ENCODE measurements at regions of chr19 and their contacts with region 1.

Region 1: DNA sequence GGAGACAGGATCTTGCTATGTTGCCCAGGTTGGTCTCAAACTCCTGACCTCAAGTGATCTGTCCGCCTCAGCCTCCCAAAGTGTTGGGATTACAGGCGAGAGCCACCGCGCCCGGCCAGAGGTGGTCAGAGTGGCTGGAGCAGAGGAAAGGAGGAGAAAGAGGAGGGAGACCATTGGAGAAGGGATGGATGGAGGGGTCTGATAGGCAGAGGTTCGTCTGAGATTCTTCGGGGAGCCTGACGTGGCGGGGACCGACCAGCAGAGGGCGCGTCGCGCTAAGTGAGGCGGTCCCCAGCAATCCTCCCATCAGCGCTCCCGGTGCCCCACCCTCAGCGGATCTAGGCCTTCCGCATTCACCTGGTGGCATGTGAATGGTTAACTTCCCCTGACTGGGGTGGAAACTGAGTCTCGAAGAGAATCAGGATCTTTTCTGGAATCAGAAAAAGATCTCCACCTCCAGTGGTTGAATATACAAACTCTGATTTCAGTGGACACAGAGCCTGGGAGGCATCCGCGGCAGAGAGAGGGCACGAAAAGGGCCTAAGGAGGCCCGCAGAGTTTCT is 8.8 kb downstream of the GTPBP3 start:
- DNase-seq: peak; percentile 88
- ATAC-seq: peak; percentile 100
- H3K4me3 Mint-ChIP-seq: no peak overlapping the region
- H3K27ac Mint-ChIP-seq: no peak overlapping the region
- H3K4me1 Mint-ChIP-seq: peaks cover 2% of the 10 kb centered on the region
- H3K27me3 Mint-ChIP-seq: peaks cover 17% of the 10 kb centered on the region
- CTCF ChIP-seq: peak; percentile 95

Region 2: GRCh38 chr19:17358395-17358794 is 12.2 kb after region 1 on chr19:
- CTCF ChIA-PET with region 1: interaction called, 11 read pairs
- POLR2A ChIA-PET with region 1: no interaction called
- intact Hi-C with region 1: no loop called
- DNase-seq: no peak
- ATAC-seq: no peak
- H3K4me3 Mint-ChIP-seq: no peak overlapping the region
- H3K27ac Mint-ChIP-seq: no peak overlapping the region
- H3K4me1 Mint-ChIP-seq: no peaks in the 10 kb centered on the region
- H3K27me3 Mint-ChIP-seq: no peaks in the 10 kb centered on the region
- CTCF ChIP-seq: no peak

Measured in activated CD8-positive, alpha-beta T cell treated with anti-CD3 and anti-CD28 coated beads for 36 hours (primary cell).